ENCODE measurements at regions of chr17 and their contacts with region 1.

Region 1: DNA sequence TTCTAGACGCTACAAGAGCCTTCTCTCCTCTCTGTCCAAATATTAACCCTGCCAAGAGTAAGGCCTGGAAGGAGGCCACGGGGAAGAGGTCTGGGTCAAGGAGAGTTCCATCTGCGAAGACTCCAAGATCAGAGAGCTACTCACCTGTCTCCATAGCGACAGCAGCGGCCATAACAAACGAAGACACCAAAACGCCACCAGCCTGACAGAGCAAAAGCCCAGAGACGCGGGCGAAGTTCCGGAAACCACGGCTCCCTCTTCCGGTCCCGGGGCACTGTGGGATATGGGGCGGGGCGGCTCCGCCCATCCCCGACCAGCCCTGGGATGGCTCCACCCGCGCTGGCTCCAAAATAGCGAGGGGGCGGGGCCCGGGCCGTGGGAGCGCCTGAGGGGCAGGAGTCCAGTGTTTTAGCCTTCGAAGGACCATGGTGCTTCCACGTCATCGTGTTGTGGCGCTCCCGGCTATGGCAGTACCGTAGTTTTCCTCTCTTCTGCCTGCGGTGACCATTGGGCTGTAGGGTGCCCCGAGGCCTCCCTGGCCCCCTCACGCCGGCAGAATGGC is at the starts of genes C17orf100 and MED31:
- DNase-seq: peak; percentile 67
- ATAC-seq: peak; percentile 99
- H3K4me3 ChIP-seq: peak within 1 kb of the TSS; percentile 91
- H3K27ac ChIP-seq: peak within 1 kb of the TSS; percentile 77
- H3K4me1 ChIP-seq: peaks cover 6% of the 10 kb centered on the region; the same call in 1 of the 2 replicates
- H3K27me3 ChIP-seq: no peaks in the 10 kb centered on the region
- CTCF ChIP-seq: no peak
- EP300 ChIP-seq: no peak
- POLR2A ChIP-seq: peak; percentile 76
- RAD21 ChIP-seq: no peak
- polyA plus RNA-seq, gene C17orf100: 0.84 to 1.5 TPM
- polyA plus RNA-seq, gene MED31: 46.1 to 51.1 TPM

Region 2: GRCh38 chr17:6473128-6473767 is 178.2 kb before region 1 on chr17:
- CTCF ChIA-PET with region 1: interaction called, 38 read pairs
- POLR2A ChIA-PET with region 1: no interaction called
- RAD21 ChIA-PET with region 1: interaction called, 18 read pairs
- SMC1A ChIA-PET with region 1: interaction called, 12 read pairs
- in situ Hi-C with region 1: loop called (anchors 5 kb)
- intact Hi-C with region 1: loop called (anchors 1 kb)
- DNase-seq: no peak
- ATAC-seq: peak; percentile 93
- H3K4me3 ChIP-seq: no peak overlapping the region
- H3K27ac ChIP-seq: no peak overlapping the region
- H3K4me1 ChIP-seq: no peaks in the 10 kb centered on the region
- H3K27me3 ChIP-seq: no peaks in the 10 kb centered on the region
- CTCF ChIP-seq: peak; percentile 85 to 96 (median 91)
- EP300 ChIP-seq: no peak
- POLR2A ChIP-seq: no peak
- RAD21 ChIP-seq: peak; percentile 69

Region 3: GRCh38 chr17:6640536-6641373 is 10.7 kb before region 1 on chr17 and contains the starts of genes KIAA0753 and TXNDC17:
- CTCF ChIA-PET with region 1: interaction called, 5 read pairs
- POLR2A ChIA-PET with region 1: interaction called, 11 read pairs
- RAD21 ChIA-PET with region 1: interaction called, 3 read pairs
- SMC1A ChIA-PET with region 1: interaction called, 8 read pairs
- in situ Hi-C with region 1: no loop called
- intact Hi-C with region 1: loop called (anchors 1 kb)
- DNase-seq: peak; percentile 84
- ATAC-seq: peak; percentile 94
- H3K4me3 ChIP-seq: peak within 1 kb of the TSS; percentile 87
- H3K27ac ChIP-seq: peak within 1 kb of the TSS; percentile 83
- H3K4me1 ChIP-seq: peaks cover 11% of the 10 kb centered on the region; the same call in 1 of the 2 replicates
- H3K27me3 ChIP-seq: no peaks in the 10 kb centered on the region
- CTCF ChIP-seq: no peak
- EP300 ChIP-seq: peak in 1 of 2 experiments; percentile 49; a peak in 2 of 4 replicates
- POLR2A ChIP-seq: peak; percentile 99
- RAD21 ChIP-seq: no peak
- polyA plus RNA-seq, gene KIAA0753: 2.2 to 3.3 TPM
- polyA plus RNA-seq, gene TXNDC17: 933 to 957 TPM

Region 4: GRCh38 chr17:6677158-6677831 is 25.9 kb after region 1 on chr17:
- CTCF ChIA-PET with region 1: no interaction called
- POLR2A ChIA-PET with region 1: no interaction called
- RAD21 ChIA-PET with region 1: no interaction called
- SMC1A ChIA-PET with region 1: no interaction called
- in situ Hi-C with region 1: no loop called
- intact Hi-C with region 1: no loop called
- DNase-seq: no peak
- ATAC-seq: peak; percentile 45
- H3K4me3 ChIP-seq: no peak overlapping the region
- H3K27ac ChIP-seq: no peak overlapping the region
- H3K4me1 ChIP-seq: peaks cover 4% of the 10 kb centered on the region; the same call in 1 of the 2 replicates
- H3K27me3 ChIP-seq: peaks cover 0 to 5% of the 10 kb centered on the region in 2 experiments; a peak in 3 of 4 replicates
- CTCF ChIP-seq: no peak
- EP300 ChIP-seq: no peak
- POLR2A ChIP-seq: no peak
- RAD21 ChIP-seq: no peak

Region 5: DNA sequence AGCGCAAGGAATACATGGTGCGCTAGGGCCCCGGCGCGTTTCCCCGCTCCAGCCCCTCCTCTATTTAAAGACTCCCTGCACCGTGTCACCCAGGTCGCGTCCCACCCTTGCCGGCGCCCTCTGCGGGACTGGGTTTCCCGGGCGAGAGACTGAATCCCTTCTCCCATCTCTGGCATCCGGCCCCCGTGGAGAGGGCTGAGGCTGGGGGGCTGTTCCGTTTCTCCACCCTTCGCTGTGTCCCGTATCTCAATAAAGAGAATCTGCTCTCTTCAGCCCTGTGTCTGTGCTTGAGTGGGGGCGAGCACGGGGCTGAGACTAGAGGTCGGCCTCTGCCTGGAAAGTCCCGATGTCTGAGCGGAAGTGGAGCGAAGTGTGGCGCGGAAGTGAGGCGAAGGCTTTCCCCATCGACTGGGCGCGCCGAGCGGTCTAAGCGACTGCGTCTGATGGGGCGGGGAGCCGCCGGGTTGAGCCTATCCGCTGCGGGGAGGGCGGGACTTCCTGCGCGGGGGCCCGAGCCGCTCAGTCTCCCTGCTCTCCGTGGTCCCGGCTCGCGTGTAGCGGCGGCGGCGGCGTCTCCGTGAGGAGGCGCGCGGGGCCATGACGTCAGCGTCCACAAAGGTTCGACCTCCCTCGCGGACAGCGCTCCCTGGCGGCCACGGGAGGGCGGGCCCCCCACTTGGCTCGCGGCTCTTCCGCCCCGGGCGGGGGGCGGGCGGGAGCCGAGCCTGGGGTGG is 363.0 kb after region 1 on chr17:
- CTCF ChIA-PET with region 1: no interaction called
- POLR2A ChIA-PET with region 1: interaction called, 3 read pairs
- RAD21 ChIA-PET with region 1: no interaction called
- SMC1A ChIA-PET with region 1: no interaction called
- in situ Hi-C with region 1: loop called (anchors 5 kb)
- intact Hi-C with region 1: no loop called
- DNase-seq: peak; percentile 86
- ATAC-seq: peak; percentile 89
- H3K4me3 ChIP-seq: peak overlapping the region; percentile 100
- H3K27ac ChIP-seq: peak overlapping the region; percentile 100
- H3K4me1 ChIP-seq: peaks cover 34% of the 10 kb centered on the region
- H3K27me3 ChIP-seq: no peaks in the 10 kb centered on the region
- CTCF ChIP-seq: peak; percentile 46 to 67 (median 60); a peak in 5 of 6 replicates
- EP300 ChIP-seq: peak; percentile 26 to 46; a peak in 2 of 4 replicates
- POLR2A ChIP-seq: peak; percentile 84
- RAD21 ChIP-seq: no peak